ENCODE measurements at regions of chr4 and their contacts with region 1.

Region 1: GRCh38 chr4:6771229-6771671 is 11.3 kb upstream of the KIAA0232 start:
- DNase-seq: peak in 1 of 2 donors; percentile 49
- H3K4me3 ChIP-seq: no peak overlapping the region
- H3K27ac ChIP-seq: peak overlapping the region in 1 of 2 donors; percentile 22
- H3K4me1 ChIP-seq: peaks cover 0 to 7% of the 10 kb centered on the region in 2 donors
- H3K27me3 ChIP-seq: no peaks in the 10 kb centered on the region
- CTCF ChIP-seq: no peak
- POLR2A ChIP-seq: no peak

Region 2: DNA sequence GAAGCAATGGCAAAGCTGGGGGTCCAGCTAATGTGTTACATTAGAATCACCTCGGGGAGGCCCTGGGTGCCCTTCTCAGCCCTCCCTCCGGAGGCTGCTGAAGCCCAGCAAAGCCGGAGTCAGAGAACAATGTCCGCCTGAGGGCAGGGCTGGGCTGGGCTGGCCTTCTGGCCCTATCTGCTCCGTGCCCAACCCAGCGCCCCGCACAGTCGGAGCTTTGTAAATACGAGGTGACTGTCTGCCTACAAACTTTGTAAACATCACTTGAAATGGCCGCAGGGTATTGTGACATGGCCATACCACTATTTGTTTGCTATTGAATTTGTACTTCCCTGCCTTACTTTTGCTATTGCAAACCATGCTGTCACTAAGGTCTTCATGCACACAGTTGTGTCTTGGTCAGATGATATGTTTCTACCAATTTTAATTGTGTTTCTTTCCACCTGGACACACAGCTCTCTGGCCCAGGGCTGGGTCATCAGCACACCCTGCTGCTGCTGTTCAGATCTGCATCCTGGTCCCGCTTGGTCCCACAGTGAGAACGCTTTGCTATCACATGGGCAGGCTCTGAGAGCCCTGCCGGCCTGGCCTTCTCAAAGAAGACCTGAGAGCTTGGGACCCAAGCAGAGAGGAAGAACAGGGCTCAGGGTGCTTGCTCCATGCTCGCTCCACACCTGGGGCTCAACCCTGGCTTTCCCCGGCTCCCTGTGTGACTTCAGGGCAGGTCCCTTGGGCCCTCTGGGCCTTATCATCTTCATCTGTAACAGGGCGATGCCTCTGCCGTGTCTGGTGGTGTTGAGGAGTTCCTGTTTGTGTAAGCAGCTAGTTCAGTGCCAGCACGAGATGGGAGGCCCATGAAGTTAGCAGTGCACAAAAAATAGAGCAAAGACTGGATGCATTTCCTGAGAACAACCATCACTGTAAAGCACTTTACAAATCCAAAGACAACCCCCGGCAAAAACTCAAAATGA is 75.3 kb before region 1 on chr4:
- intact Hi-C with region 1: no loop called
- DNase-seq: no peak
- H3K4me3 ChIP-seq: no peak overlapping the region
- H3K27ac ChIP-seq: no peak overlapping the region
- H3K4me1 ChIP-seq: no peaks in the 10 kb centered on the region
- H3K27me3 ChIP-seq: no peaks in the 10 kb centered on the region
- CTCF ChIP-seq: no peak
- POLR2A ChIP-seq: no peak

Region 3: GRCh38 chr4:6794189-6794588 is 22.9 kb after region 1 on chr4:
- intact Hi-C with region 1: loop called (anchors 2 kb)
- DNase-seq: no peak
- H3K4me3 ChIP-seq: no peak overlapping the region
- H3K27ac ChIP-seq: no peak overlapping the region
- H3K4me1 ChIP-seq: peaks cover 0 to 5% of the 10 kb centered on the region in 2 donors
- H3K27me3 ChIP-seq: no peaks in the 10 kb centered on the region
- CTCF ChIP-seq: no peak
- POLR2A ChIP-seq: no peak

Region 4: GRCh38 chr4:6929812-6930464 is 158.7 kb after region 1 on chr4:
- intact Hi-C with region 1: no loop called
- DNase-seq: no peak
- H3K4me3 ChIP-seq: no peak overlapping the region
- H3K27ac ChIP-seq: no peak overlapping the region
- H3K4me1 ChIP-seq: peaks cover 0 to 7% of the 10 kb centered on the region in 2 donors
- H3K27me3 ChIP-seq: no peaks in the 10 kb centered on the region
- CTCF ChIP-seq: no peak
- POLR2A ChIP-seq: no peak

Measured in uterus (tissue), 4 donors.